ENCODE measurements at regions of chr17 and their contacts with region 1.

Region 1: DNA sequence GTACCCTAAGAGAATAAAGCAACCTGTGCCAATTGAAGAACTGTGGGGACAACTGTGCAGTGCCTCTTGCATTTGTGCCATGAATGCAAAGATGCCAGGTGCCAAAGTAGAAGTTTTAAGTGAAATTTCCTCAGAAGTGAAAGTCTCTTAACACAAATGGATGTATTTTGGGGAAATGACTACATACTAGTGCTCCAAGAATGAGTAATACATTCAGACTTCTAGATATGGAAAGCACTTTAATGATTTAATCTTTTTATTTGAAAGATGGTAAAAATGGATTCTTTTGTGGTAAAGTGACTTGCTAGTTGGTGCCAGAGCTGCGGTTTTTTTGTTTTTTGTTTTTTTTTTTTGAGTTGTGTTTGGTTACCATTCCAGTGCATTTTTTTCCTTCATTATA is 15.0 kb downstream of the UTP18 start:
- DNase-seq: no peak
- H3K4me3 ChIP-seq: no peak overlapping the region
- H3K27ac ChIP-seq: no peak overlapping the region
- H3K4me1 ChIP-seq: no peaks in the 10 kb centered on the region
- CTCF ChIP-seq: no peak

Region 2: GRCh38 chr17:51180486-51180885 is 94.9 kb before region 1 on chr17:
- CTCF ChIA-PET with region 1: no interaction called
- POLR2A ChIA-PET with region 1: interaction called, 4 read pairs
- intact Hi-C with region 1: loop called (anchors 5 kb)
- DNase-seq: no peak
- H3K4me3 ChIP-seq: no peak overlapping the region
- H3K27ac ChIP-seq: no peak overlapping the region
- H3K4me1 ChIP-seq: no peaks in the 10 kb centered on the region
- CTCF ChIP-seq: no peak

Region 3: GRCh38 chr17:51200295-51200694 is 75.1 kb before region 1 on chr17:
- CTCF ChIA-PET with region 1: no interaction called
- POLR2A ChIA-PET with region 1: no interaction called
- intact Hi-C with region 1: loop called (anchors 5 kb)
- DNase-seq: no peak
- H3K4me3 ChIP-seq: no peak overlapping the region
- H3K27ac ChIP-seq: no peak overlapping the region
- H3K4me1 ChIP-seq: no peaks in the 10 kb centered on the region
- CTCF ChIP-seq: no peak